ENCODE measurements at regions of chr7 and their contacts with region 1.

Region 1: GRCh38 chr7:141975806-141976523 is 2.4 kb upstream of the TAS2R38 start:
- DNase-seq: peak; percentile 81
- H3K4me3 ChIP-seq: peak overlapping the region; percentile 51 to 60
- H3K27ac ChIP-seq: no peak overlapping the region
- H3K4me1 ChIP-seq: peaks cover 4% of the 10 kb centered on the region in 2 experiments; a peak in 1 of 4 replicates
- H3K27me3 ChIP-seq: peaks cover 11% of the 10 kb centered on the region; the same call in 1 of the 2 replicates
- CTCF ChIP-seq: peak; percentile 100
- EP300 ChIP-seq: no peak
- RAD21 ChIP-seq: peak; percentile 93

Region 2: GRCh38 chr7:141945356-141945755 is 30.6 kb before region 1 on chr7:
- CTCF ChIA-PET with region 1: interaction called, 15 read pairs
- POLR2A ChIA-PET with region 1: no interaction called
- DNase-seq: no peak
- H3K4me3 ChIP-seq: no peak overlapping the region
- H3K27ac ChIP-seq: no peak overlapping the region
- H3K4me1 ChIP-seq: no peaks in the 10 kb centered on the region
- H3K27me3 ChIP-seq: no peaks in the 10 kb centered on the region
- CTCF ChIP-seq: no peak
- EP300 ChIP-seq: no peak
- RAD21 ChIP-seq: no peak

Region 3: GRCh38 chr7:141992156-141992555 is 16.2 kb after region 1 on chr7:
- CTCF ChIA-PET with region 1: interaction called, 43 read pairs
- POLR2A ChIA-PET with region 1: no interaction called
- DNase-seq: no peak
- H3K4me3 ChIP-seq: no peak overlapping the region
- H3K27ac ChIP-seq: no peak overlapping the region
- H3K4me1 ChIP-seq: 0 out of 4 replicates have a peak, but pooled peaks cover 0 to 4% of the 10 kb centered on the region in 2 experiments
- H3K27me3 ChIP-seq: no peaks in the 10 kb centered on the region
- CTCF ChIP-seq: no peak
- EP300 ChIP-seq: no peak
- RAD21 ChIP-seq: no peak

Region 4: GRCh38 chr7:142012825-142013511 is 37.0 kb after region 1 on chr7:
- CTCF ChIA-PET with region 1: interaction called, 11 read pairs
- POLR2A ChIA-PET with region 1: no interaction called
- DNase-seq: no peak
- H3K4me3 ChIP-seq: no peak overlapping the region
- H3K27ac ChIP-seq: peak overlapping the region in 1 of 2 experiments; percentile 36; a peak in 2 of 4 replicates
- H3K4me1 ChIP-seq: peaks cover 0 to 10% of the 10 kb centered on the region in 2 experiments; a peak in 1 of 4 replicates
- H3K27me3 ChIP-seq: no peaks in the 10 kb centered on the region
- CTCF ChIP-seq: peak; percentile 36
- EP300 ChIP-seq: no peak
- RAD21 ChIP-seq: no peak

Region 5: GRCh38 chr7:142194201-142194600 is 218.2 kb after region 1 on chr7:
- CTCF ChIA-PET with region 1: interaction called, 14 read pairs
- POLR2A ChIA-PET with region 1: no interaction called
- DNase-seq: no peak
- H3K4me3 ChIP-seq: no peak overlapping the region
- H3K27ac ChIP-seq: no peak overlapping the region
- H3K4me1 ChIP-seq: no peaks in the 10 kb centered on the region; a peak in 1 of 4 replicates
- H3K27me3 ChIP-seq: peaks cover 6% of the 10 kb centered on the region; the same call in 1 of the 2 replicates
- CTCF ChIP-seq: no peak
- EP300 ChIP-seq: no peak; a peak in 1 of 4 replicates
- RAD21 ChIP-seq: no peak

Region 6: GRCh38 chr7:142227477-142227876 is 251.5 kb after region 1 on chr7:
- CTCF ChIA-PET with region 1: no interaction called
- POLR2A ChIA-PET with region 1: no interaction called
- DNase-seq: no peak
- H3K4me3 ChIP-seq: no peak overlapping the region
- H3K27ac ChIP-seq: no peak overlapping the region
- H3K4me1 ChIP-seq: no peaks in the 10 kb centered on the region
- H3K27me3 ChIP-seq: peaks cover 17% of the 10 kb centered on the region; the same call in 1 of the 2 replicates
- CTCF ChIP-seq: no peak
- EP300 ChIP-seq: no peak
- RAD21 ChIP-seq: no peak

Region 7: DNA sequence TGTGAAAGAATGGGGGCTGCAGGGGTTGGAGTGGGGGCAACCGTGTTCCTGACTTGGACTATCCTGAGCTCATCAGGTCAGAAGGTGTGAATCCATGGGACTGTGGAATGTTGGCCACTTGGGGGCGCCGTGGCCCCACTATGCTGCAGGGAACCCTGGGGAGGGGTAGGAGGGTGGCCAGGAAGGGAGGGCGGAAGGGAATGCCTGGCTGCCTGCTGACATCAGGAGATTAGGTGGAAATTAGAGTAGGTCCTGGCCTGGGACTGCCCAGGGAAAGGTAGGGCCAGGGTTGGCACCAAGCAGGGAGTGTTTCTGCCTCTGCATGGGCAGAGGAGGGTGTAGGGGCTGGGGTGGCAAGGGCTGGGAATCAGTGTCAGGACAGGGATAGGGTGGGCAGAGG is 347.7 kb after region 1 on chr7:
- CTCF ChIA-PET with region 1: interaction called, 12 read pairs
- POLR2A ChIA-PET with region 1: no interaction called
- DNase-seq: peak; percentile 49
- H3K4me3 ChIP-seq: no peak overlapping the region
- H3K27ac ChIP-seq: no peak overlapping the region
- H3K4me1 ChIP-seq: no peaks in the 10 kb centered on the region
- H3K27me3 ChIP-seq: peaks cover 8% of the 10 kb centered on the region; the same call in 1 of the 2 replicates
- CTCF ChIP-seq: peak; percentile 52
- EP300 ChIP-seq: no peak
- RAD21 ChIP-seq: no peak; the same call in 1 of the 2 replicates